Ascending aorta (tissue), 2 donors: ENCODE measurements at regions of chr10 and their contacts with region 1.

Region 1: GRCh38 chr10:15439341-15439842 is 68.3 kb upstream of the FAM171A1 start:
- DNase-seq: peak in 1 of 2 donors; percentile 91
- H3K4me3 ChIP-seq: peak overlapping the region; percentile 36 to 43
- H3K27ac ChIP-seq: peak overlapping the region; percentile 87 to 90
- H3K4me1 ChIP-seq: peaks cover 4 to 13% of the 10 kb centered on the region in 2 donors
- H3K27me3 ChIP-seq: no peaks in the 10 kb centered on the region
- CTCF ChIP-seq: peak; percentile 34 to 52 (median 45)

Region 2: DNA sequence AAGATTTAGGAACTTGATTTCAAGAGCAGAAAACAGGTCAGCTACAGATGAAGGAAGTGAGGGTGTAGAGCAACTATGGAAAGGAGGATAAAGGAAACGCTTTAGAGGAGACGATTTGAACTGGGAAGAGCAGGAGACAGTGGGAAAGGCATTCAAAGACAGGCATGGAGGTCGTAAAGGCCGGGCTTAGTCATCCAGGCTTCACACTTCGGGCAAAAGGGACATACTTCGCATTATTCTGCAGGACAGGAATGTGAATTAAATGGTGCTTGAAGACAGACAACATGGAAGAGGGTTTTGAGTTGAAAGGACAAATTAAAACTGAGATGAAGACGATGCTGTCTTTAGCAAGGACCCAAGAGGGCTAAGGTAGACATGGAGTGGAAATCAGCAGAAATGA is 76.4 kb before region 1 on chr10:
- intact Hi-C with region 1: no loop called
- DNase-seq: no peak
- H3K4me3 ChIP-seq: no peak overlapping the region
- H3K27ac ChIP-seq: no peak overlapping the region
- H3K4me1 ChIP-seq: no peaks in the 10 kb centered on the region
- H3K27me3 ChIP-seq: no peaks in the 10 kb centered on the region
- CTCF ChIP-seq: no peak

Region 3: GRCh38 chr10:15419279-15419874 is 20.0 kb before region 1 on chr10:
- intact Hi-C with region 1: no loop called
- DNase-seq: no peak
- H3K4me3 ChIP-seq: no peak overlapping the region
- H3K27ac ChIP-seq: no peak overlapping the region
- H3K4me1 ChIP-seq: no peaks in the 10 kb centered on the region
- H3K27me3 ChIP-seq: no peaks in the 10 kb centered on the region
- CTCF ChIP-seq: peak; percentile 47 to 77 (median 71)

Region 4: GRCh38 chr10:15485684-15486316 is 46.4 kb after region 1 on chr10:
- intact Hi-C with region 1: loop called (anchors 2 kb)
- DNase-seq: peak; percentile 58 to 92
- H3K4me3 ChIP-seq: no peak overlapping the region
- H3K27ac ChIP-seq: peak overlapping the region; percentile 85 to 91
- H3K4me1 ChIP-seq: peaks cover 15 to 58% of the 10 kb centered on the region in 2 donors
- H3K27me3 ChIP-seq: no peaks in the 10 kb centered on the region
- CTCF ChIP-seq: peak in 1 of 3 experiments; percentile 4

Region 5: DNA sequence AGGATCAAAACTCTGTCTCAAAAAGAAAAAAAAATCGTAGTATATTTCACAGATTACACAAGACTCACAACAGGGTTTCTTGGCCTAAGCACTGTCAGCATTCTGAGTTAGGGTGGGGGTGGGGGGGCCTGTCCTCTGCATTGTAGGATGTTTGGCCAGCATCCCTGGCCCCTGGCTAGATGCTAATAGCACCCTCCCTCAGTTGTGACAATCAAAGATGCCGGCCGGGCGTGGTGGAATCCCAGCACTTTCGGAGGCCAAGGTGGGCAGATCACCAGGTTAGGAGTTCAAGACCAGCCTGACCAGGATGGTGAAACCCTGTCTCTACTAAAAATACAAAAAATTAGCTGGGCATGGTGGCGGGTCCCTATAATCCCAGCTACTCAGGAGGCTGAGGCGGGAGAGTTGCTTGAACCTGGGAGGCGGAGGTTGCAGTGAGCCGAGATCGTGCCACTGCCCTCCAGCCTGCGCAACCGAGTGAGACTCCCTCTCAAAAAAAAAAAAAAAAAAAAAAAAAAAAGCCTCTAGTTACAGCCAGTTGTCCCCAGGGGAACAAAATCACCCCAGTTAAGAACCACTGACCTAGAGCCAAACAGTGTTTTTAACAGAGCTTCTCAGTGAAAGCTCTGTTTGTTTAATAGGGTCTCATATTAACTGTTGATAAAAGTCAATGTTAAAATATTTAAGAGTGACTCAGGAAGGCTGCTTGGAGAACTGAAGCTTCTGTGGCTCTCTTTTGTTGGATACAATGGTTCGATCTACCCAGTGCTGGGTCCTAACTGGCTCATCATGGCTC is 92.7 kb after region 1 on chr10:
- intact Hi-C with region 1: loop called (anchors 5 kb)
- DNase-seq: no peak
- H3K4me3 ChIP-seq: no peak overlapping the region
- H3K27ac ChIP-seq: peak overlapping the region; percentile 82 to 86
- H3K4me1 ChIP-seq: peaks cover 3 to 28% of the 10 kb centered on the region in 2 donors
- H3K27me3 ChIP-seq: no peaks in the 10 kb centered on the region
- CTCF ChIP-seq: no peak

Region 6: GRCh38 chr10:15567581-15568351 is 128.4 kb after region 1 on chr10:
- intact Hi-C with region 1: loop called (anchors 5 kb)
- DNase-seq: no peak
- H3K4me3 ChIP-seq: no peak overlapping the region
- H3K27ac ChIP-seq: peak overlapping the region; percentile 40 to 69
- H3K4me1 ChIP-seq: peaks cover 0 to 28% of the 10 kb centered on the region in 2 donors
- H3K27me3 ChIP-seq: no peaks in the 10 kb centered on the region
- CTCF ChIP-seq: no peak